Gastrocnemius medialis (tissue), 4 donors: ENCODE measurements at regions of chr10 and their contacts with region 1.

Region 1: GRCh38 chr10:78053211-78053868 is 19.7 kb downstream of the RPS24 start:
- DNase-seq: no peak
- ATAC-seq: no peak
- H3K4me3 ChIP-seq: no peak overlapping the region
- H3K27ac ChIP-seq: no peak overlapping the region
- H3K4me1 ChIP-seq: no peaks in the 10 kb centered on the region
- H3K27me3 ChIP-seq: no peaks in the 10 kb centered on the region
- CTCF ChIP-seq: no peak
- POLR2A ChIP-seq: no peak

Region 2: DNA sequence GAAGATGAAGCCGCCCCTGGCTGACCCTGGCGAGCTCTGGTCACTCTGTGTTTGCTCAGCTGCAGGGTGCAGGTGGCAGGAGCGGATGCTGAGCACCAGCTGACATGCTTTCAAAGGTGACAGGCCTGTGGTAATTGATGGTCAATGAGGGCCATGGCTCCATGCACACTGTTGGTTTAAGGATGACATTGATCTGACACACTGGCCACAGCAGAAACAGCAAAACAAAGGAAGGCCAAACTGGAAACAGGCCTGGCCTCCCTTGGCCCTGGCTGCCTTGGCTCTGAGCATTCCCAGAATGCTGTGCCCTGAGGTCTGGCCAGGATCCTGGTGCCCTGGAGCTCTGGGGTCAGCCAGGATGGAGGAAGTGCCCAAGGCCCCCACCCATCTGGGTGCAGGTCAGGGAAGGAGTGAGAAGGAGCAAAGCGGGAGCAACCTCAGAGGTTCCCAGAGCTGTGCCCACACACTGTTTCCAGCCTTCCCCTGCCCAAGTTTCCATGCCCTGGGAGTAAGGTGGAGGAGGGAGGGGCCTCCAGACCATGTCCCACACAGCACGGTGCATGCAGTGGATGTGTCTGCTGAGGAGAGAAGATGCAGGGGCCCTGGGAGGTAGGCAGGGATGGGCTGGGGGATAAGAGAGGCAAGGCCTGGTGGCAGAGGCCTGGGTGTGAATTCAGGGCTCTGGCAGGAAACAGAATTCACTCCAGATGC is 282.5 kb after region 1 on chr10:
- in situ Hi-C with region 1: loop called in 1 of 4 experiments (anchors 25 kb)
- intact Hi-C with region 1: no loop called
- DNase-seq: no peak
- ATAC-seq: peak; percentile 37 to 47
- H3K4me3 ChIP-seq: no peak overlapping the region
- H3K27ac ChIP-seq: no peak overlapping the region
- H3K4me1 ChIP-seq: peaks cover 22 to 25% of the 10 kb centered on the region in 2 donors
- H3K27me3 ChIP-seq: no peaks in the 10 kb centered on the region
- CTCF ChIP-seq: no peak
- POLR2A ChIP-seq: no peak

Region 3: GRCh38 chr10:78362406-78363022 is 309.2 kb after region 1 on chr10:
- in situ Hi-C with region 1: no loop called
- intact Hi-C with region 1: no loop called
- DNase-seq: peak; percentile 23 to 28
- ATAC-seq: no peak
- H3K4me3 ChIP-seq: no peak overlapping the region
- H3K27ac ChIP-seq: no peak overlapping the region
- H3K4me1 ChIP-seq: no peaks in the 10 kb centered on the region
- H3K27me3 ChIP-seq: no peaks in the 10 kb centered on the region
- CTCF ChIP-seq: no peak
- POLR2A ChIP-seq: no peak

Region 4: DNA sequence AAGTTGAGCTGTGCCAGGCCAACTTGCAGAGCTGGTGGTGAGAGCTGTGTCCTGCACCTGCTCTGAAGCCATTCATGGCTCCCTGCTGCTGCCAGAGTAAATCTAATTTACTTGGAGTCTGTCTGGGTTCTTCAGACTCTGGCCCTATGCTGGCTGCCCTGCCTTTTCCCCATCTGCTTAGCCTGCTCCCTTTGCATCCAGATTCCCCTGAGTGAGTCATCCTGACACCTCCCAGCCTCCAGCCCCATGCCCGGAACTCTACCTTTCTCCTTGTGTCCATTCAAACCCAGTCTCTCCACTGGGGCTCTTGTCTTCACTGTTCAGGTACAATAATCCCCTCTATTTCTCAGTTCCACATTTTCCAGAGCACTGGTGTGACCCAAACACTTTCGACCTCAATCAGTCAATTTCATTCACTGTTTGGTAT is 581.1 kb after region 1 on chr10:
- in situ Hi-C with region 1: loop called in 1 of 4 experiments (anchors 25 kb)
- intact Hi-C with region 1: no loop called
- DNase-seq: no peak
- ATAC-seq: no peak
- H3K4me3 ChIP-seq: no peak overlapping the region
- H3K27ac ChIP-seq: no peak overlapping the region
- H3K4me1 ChIP-seq: no peaks in the 10 kb centered on the region
- H3K27me3 ChIP-seq: no peaks in the 10 kb centered on the region
- CTCF ChIP-seq: no peak
- POLR2A ChIP-seq: no peak